ENCODE measurements at regions of chr1 and their contacts with region 1.

Region 1: GRCh38 chr1:186212544-186213226 is 162.4 kb downstream of the TPR start:
- DNase-seq: peak; percentile 74 to 75
- H3K4me3 ChIP-seq: no peak overlapping the region
- H3K4me3 Mint-ChIP-seq: no peak overlapping the region
- H3K27ac Mint-ChIP-seq: no peak overlapping the region
- H3K4me1 ChIP-seq: no peaks in the 10 kb centered on the region
- H3K4me1 Mint-ChIP-seq: no peaks in the 10 kb centered on the region
- H3K27me3 ChIP-seq: no peaks in the 10 kb centered on the region
- H3K27me3 Mint-ChIP-seq: peaks cover 4% of the 10 kb centered on the region
- CTCF ChIP-seq: peak; percentile 74 to 76

Region 2: DNA sequence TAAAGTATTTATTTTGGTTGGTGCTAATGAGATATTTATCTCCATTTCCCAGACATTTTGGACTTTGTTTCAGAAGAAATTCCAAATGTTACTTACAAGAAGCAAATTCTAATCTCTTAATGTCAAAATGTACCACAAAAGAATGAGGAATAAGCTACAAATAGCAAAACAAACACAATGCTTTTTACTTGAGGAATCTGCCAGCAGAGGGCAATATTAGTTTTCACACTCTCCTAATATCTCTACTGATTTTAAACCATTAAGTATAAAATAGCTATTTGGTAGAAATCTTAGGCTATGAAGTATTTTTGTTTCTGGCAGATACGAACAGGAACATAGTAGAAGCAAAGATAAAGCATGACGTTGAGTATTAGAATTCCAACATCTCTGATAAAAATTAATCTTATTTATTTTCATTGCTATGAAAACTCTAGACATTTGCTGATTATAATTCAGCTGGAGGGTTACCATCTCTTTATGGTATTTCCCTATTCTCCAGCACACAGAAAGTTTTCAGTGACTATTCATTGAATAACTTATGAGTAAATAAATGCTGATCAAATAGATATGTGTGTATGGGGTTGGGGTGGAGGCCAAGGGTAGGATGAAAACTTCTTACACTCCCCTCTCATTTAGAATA is 491.9 kb before region 1 on chr1:
- CTCF ChIA-PET with region 1: interaction called, 12 read pairs
- POLR2A ChIA-PET with region 1: no interaction called
- intact Hi-C with region 1: loop called (anchors 1 kb)
- DNase-seq: peak in 1 of 2 experiments; percentile 14
- H3K4me3 ChIP-seq: no peak overlapping the region
- H3K4me3 Mint-ChIP-seq: no peak overlapping the region
- H3K27ac Mint-ChIP-seq: no peak overlapping the region
- H3K4me1 ChIP-seq: no peaks in the 10 kb centered on the region
- H3K4me1 Mint-ChIP-seq: no peaks in the 10 kb centered on the region
- H3K27me3 ChIP-seq: no peaks in the 10 kb centered on the region
- H3K27me3 Mint-ChIP-seq: peaks cover 4% of the 10 kb centered on the region
- CTCF ChIP-seq: peak; percentile 40 to 45

Region 3: GRCh38 chr1:185813401-185813979 is 399.2 kb before region 1 on chr1:
- CTCF ChIA-PET with region 1: interaction called, 6 read pairs
- POLR2A ChIA-PET with region 1: no interaction called
- intact Hi-C with region 1: loop called (anchors 1 kb)
- DNase-seq: peak in 1 of 2 experiments; percentile 43
- H3K4me3 ChIP-seq: no peak overlapping the region
- H3K4me3 Mint-ChIP-seq: no peak overlapping the region
- H3K27ac Mint-ChIP-seq: no peak overlapping the region
- H3K4me1 ChIP-seq: no peaks in the 10 kb centered on the region
- H3K4me1 Mint-ChIP-seq: no peaks in the 10 kb centered on the region
- H3K27me3 ChIP-seq: no peaks in the 10 kb centered on the region
- H3K27me3 Mint-ChIP-seq: no peaks in the 10 kb centered on the region
- CTCF ChIP-seq: peak; percentile 45 to 59

Region 4: DNA sequence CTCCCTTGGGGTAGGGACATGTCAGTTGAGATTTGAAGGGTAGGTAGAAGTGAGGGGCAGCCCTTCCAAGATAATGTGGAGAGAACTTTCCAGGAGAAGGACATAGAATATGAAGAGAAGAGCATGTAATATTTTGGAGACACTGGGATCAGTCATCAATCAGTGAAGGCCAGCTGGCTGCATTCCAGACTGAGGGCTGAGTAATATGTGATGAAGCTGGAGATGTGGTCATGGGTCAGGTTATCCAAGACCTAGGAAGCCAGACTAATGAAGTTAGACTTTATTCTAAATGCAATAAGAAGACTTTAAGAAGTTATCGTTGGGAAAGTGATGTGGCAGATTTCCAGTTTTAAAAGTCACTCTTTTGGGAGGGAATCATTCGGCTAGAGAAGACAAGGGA is 216.5 kb before region 1 on chr1:
- CTCF ChIA-PET with region 1: interaction called, 3 read pairs
- POLR2A ChIA-PET with region 1: no interaction called
- intact Hi-C with region 1: loop called (anchors 1 kb)
- DNase-seq: no peak
- H3K4me3 ChIP-seq: no peak overlapping the region
- H3K4me3 Mint-ChIP-seq: no peak overlapping the region
- H3K27ac Mint-ChIP-seq: no peak overlapping the region
- H3K4me1 ChIP-seq: no peaks in the 10 kb centered on the region
- H3K4me1 Mint-ChIP-seq: no peaks in the 10 kb centered on the region
- H3K27me3 ChIP-seq: no peaks in the 10 kb centered on the region
- H3K27me3 Mint-ChIP-seq: peaks cover 9% of the 10 kb centered on the region
- CTCF ChIP-seq: no peak

Region 5: GRCh38 chr1:186155594-186155993 is 57.1 kb before region 1 on chr1:
- CTCF ChIA-PET with region 1: interaction called, 12 read pairs
- POLR2A ChIA-PET with region 1: no interaction called
- intact Hi-C with region 1: loop called (anchors 1 kb)
- DNase-seq: peak in 1 of 2 experiments; percentile 28
- H3K4me3 ChIP-seq: no peak overlapping the region
- H3K4me3 Mint-ChIP-seq: no peak overlapping the region
- H3K27ac Mint-ChIP-seq: no peak overlapping the region
- H3K4me1 ChIP-seq: peaks cover 15% of the 10 kb centered on the region
- H3K4me1 Mint-ChIP-seq: peaks cover 8% of the 10 kb centered on the region
- H3K27me3 ChIP-seq: no peaks in the 10 kb centered on the region
- H3K27me3 Mint-ChIP-seq: peaks cover 3% of the 10 kb centered on the region
- CTCF ChIP-seq: peak; percentile 49 to 55

Region 6: DNA sequence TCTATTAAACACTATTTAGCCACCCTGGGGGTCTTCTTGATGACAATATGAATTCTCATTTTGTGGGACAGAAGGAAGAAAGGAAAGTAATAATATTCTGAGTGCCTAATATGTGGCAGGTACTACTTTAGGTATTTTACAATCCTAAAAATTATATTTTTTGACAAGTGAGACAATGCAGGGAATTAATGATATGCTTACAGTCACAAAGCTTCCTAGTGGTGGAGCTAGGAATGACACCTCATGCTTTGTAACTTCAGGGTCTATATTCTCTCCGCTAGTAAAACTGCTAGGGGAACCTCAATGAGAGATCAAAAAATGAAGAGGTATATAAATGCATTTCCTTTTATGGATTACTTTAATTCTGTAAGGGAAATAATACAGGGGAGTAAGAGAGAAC is 118.1 kb after region 1 on chr1:
- CTCF ChIA-PET with region 1: no interaction called
- POLR2A ChIA-PET with region 1: no interaction called
- intact Hi-C with region 1: no loop called
- DNase-seq: peak in 1 of 2 experiments; percentile 21
- H3K4me3 ChIP-seq: no peak overlapping the region
- H3K4me3 Mint-ChIP-seq: no peak overlapping the region
- H3K27ac Mint-ChIP-seq: no peak overlapping the region
- H3K4me1 ChIP-seq: no peaks in the 10 kb centered on the region
- H3K4me1 Mint-ChIP-seq: no peaks in the 10 kb centered on the region
- H3K27me3 ChIP-seq: no peaks in the 10 kb centered on the region
- H3K27me3 Mint-ChIP-seq: no peaks in the 10 kb centered on the region
- CTCF ChIP-seq: peak; percentile 36 to 44

Measured in Caco-2 (cell line).